Ascending aorta (tissue), 2 donors: ENCODE measurements at regions of chr1 and their contacts with region 1.

Region 1: GRCh38 chr1:15323351-15323988 is 76.4 kb downstream of the FHAD1 start:
- DNase-seq: peak in 1 of 2 donors; percentile 87
- H3K4me3 ChIP-seq: no peak overlapping the region
- H3K27ac ChIP-seq: no peak overlapping the region
- H3K4me1 ChIP-seq: peaks cover under 1 to 5% of the 10 kb centered on the region in 2 donors
- H3K27me3 ChIP-seq: no peaks in the 10 kb centered on the region
- CTCF ChIP-seq: peak; percentile 92 to 99 (median 97)

Region 2: GRCh38 chr1:15430787-15431570 is 107.5 kb after region 1 on chr1:
- intact Hi-C with region 1: loop called (anchors 1 kb)
- DNase-seq: peak in 1 of 2 donors; percentile 84
- H3K4me3 ChIP-seq: no peak overlapping the region
- H3K27ac ChIP-seq: no peak overlapping the region
- H3K4me1 ChIP-seq: no peaks in the 10 kb centered on the region
- H3K27me3 ChIP-seq: no peaks in the 10 kb centered on the region
- CTCF ChIP-seq: peak; percentile 96 to 98 (median 96)